Activated CD8-positive, alpha-beta T cell treated with anti-CD3 and anti-CD28 coated beads for 36 hours (primary cell): ENCODE measurements at regions of chr7 and their contacts with region 1.

Region 1: GRCh38 chr7:32588657-32589056 is 93.4 kb downstream of the AVL9 start:
- DNase-seq: peak; percentile 55
- ATAC-seq: peak; percentile 91
- H3K4me3 Mint-ChIP-seq: peak overlapping the region; percentile 6
- H3K27ac Mint-ChIP-seq: peak overlapping the region; percentile 88
- H3K4me1 Mint-ChIP-seq: peaks cover 29% of the 10 kb centered on the region
- H3K27me3 Mint-ChIP-seq: no peaks in the 10 kb centered on the region
- CTCF ChIP-seq: no peak

Region 2: GRCh38 chr7:32490127-32490822 is 98.4 kb before region 1 on chr7 and contains the start of gene LSM5:
- CTCF ChIA-PET with region 1: no interaction called
- POLR2A ChIA-PET with region 1: interaction called, 3 read pairs
- intact Hi-C with region 1: loop called (anchors 2 kb)
- DNase-seq: peak; percentile 94
- ATAC-seq: peak; percentile 67
- H3K4me3 Mint-ChIP-seq: peak within 1 kb of the TSS; percentile 85
- H3K27ac Mint-ChIP-seq: peak within 1 kb of the TSS; percentile 96
- H3K4me1 Mint-ChIP-seq: peaks cover 30% of the 10 kb centered on the region
- H3K27me3 Mint-ChIP-seq: no peaks in the 10 kb centered on the region
- CTCF ChIP-seq: no peak
- total RNA-seq, gene LSM5: 122 to 124 TPM

Region 3: DNA sequence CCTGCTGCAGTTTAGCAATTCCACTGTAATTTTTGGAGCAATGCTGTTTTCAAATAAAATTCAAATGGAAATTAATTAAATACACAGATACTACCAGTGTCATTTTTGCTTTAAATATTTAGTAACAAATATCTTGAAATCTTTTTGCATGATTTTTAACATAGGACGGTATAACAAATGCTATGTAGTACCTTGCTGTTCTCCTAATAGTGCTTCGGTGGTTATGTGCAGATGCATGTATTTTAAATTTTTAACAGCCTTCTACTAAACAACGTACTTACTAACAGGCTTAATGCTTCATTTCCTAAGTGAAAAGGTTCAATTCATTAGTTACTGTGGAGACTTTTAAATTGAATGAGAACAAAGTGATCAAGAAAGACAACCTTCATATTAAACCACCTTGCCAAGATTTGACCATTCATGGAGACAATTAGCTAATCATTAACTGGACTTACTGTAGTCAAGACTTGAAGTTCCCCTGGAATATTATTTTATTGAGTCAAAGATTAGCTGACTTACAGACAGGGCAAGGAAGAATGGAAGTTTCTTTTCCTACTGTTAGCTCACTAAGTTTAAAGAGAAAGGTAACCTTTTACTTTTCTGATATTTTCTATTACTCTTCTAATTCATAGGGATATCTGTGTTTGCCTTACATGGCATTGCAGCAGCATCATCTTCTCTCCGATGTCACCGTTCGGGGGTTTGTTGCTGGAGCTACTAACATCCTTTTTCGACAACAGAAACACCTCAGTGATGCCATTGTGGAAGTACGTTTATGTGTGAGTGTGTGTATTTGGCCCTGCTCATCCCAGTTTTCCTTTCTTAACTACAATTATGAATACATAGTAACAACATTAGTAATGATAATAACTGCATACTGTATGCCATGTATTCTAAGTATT is 19.0 kb before region 1 on chr7:
- CTCF ChIA-PET with region 1: no interaction called
- POLR2A ChIA-PET with region 1: no interaction called
- intact Hi-C with region 1: no loop called
- DNase-seq: no peak
- ATAC-seq: no peak
- H3K4me3 Mint-ChIP-seq: no peak overlapping the region
- H3K27ac Mint-ChIP-seq: no peak overlapping the region
- H3K4me1 Mint-ChIP-seq: no peaks in the 10 kb centered on the region
- H3K27me3 Mint-ChIP-seq: no peaks in the 10 kb centered on the region
- CTCF ChIP-seq: no peak